ENCODE measurements at regions of chr3 and their contacts with region 1.

Region 1: GRCh38 chr3:48472915-48473616 is 26.5 kb downstream of the ATRIP start:
- DNase-seq: peak; percentile 96
- ATAC-seq: peak; percentile 90
- H3K4me3 ChIP-seq: peak overlapping the region; percentile 61 to 83 (median 65)
- H3K27ac ChIP-seq: peak overlapping the region; percentile 89
- H3K4me1 ChIP-seq: peaks cover 58% of the 10 kb centered on the region
- H3K27me3 ChIP-seq: no peaks in the 10 kb centered on the region; a peak in 1 of 5 replicates
- CTCF ChIP-seq: peak; percentile 79
- EP300 ChIP-seq: peak in 1 of 2 experiments; percentile 55; a peak in 2 of 4 replicates
- POLR2A ChIP-seq: peak in 1 of 2 experiments; percentile 72; a peak in 1 of 4 replicates
- RAD21 ChIP-seq: peak; percentile 75

Region 2: GRCh38 chr3:48240711-48241491 is 232.2 kb before region 1 on chr3 and contains the start of gene ZNF589:
- CTCF ChIA-PET with region 1: no interaction called
- POLR2A ChIA-PET with region 1: interaction called, 10 read pairs
- in situ Hi-C with region 1: no loop called
- intact Hi-C with region 1: no loop called
- DNase-seq: peak; percentile 94
- ATAC-seq: peak; percentile 98
- H3K4me3 ChIP-seq: peak within 1 kb of the TSS; percentile 76 to 97 (median 91)
- H3K27ac ChIP-seq: peak within 1 kb of the TSS; percentile 83
- H3K4me1 ChIP-seq: peaks cover 45% of the 10 kb centered on the region
- H3K27me3 ChIP-seq: no peaks in the 10 kb centered on the region
- CTCF ChIP-seq: peak; percentile 86
- EP300 ChIP-seq: no peak
- POLR2A ChIP-seq: peak; percentile 92 to 95
- RAD21 ChIP-seq: 0 out of 2 replicates have a peak, but pooled peaks have one; percentile 23
- total RNA-seq, gene ZNF589: 5.6 and 7.3 TPM in 2 replicates

Region 3: GRCh38 chr3:48318783-48319468 is 154.1 kb before region 1 on chr3:
- CTCF ChIA-PET with region 1: no interaction called
- POLR2A ChIA-PET with region 1: no interaction called
- in situ Hi-C with region 1: no loop called
- intact Hi-C with region 1: no loop called
- DNase-seq: no peak
- ATAC-seq: no peak
- H3K4me3 ChIP-seq: no peak overlapping the region
- H3K27ac ChIP-seq: no peak overlapping the region
- H3K4me1 ChIP-seq: no peaks in the 10 kb centered on the region; the same call in 1 of the 2 replicates
- H3K27me3 ChIP-seq: no peaks in the 10 kb centered on the region; a peak in 1 of 5 replicates
- CTCF ChIP-seq: no peak
- EP300 ChIP-seq: no peak
- POLR2A ChIP-seq: no peak
- RAD21 ChIP-seq: no peak

Region 4: GRCh38 chr3:48439820-48440589 is 33.1 kb before region 1 on chr3 and contains the starts of genes CCDC51 and TMA7:
- CTCF ChIA-PET with region 1: no interaction called
- POLR2A ChIA-PET with region 1: interaction called, 41 read pairs
- in situ Hi-C with region 1: no loop called
- intact Hi-C with region 1: no loop called
- DNase-seq: peak; percentile 96
- ATAC-seq: peak; percentile 94
- H3K4me3 ChIP-seq: peak within 1 kb of the TSS; percentile 90 to 95 (median 93)
- H3K27ac ChIP-seq: peak within 1 kb of the TSS; percentile 73
- H3K4me1 ChIP-seq: peaks cover 52% of the 10 kb centered on the region
- H3K27me3 ChIP-seq: no peaks in the 10 kb centered on the region; a peak in 1 of 5 replicates
- CTCF ChIP-seq: peak; percentile 19; the same call in 1 of the 2 replicates
- EP300 ChIP-seq: no peak
- POLR2A ChIP-seq: peak; percentile 79 to 86
- RAD21 ChIP-seq: peak; percentile 7; the same call in 1 of the 2 replicates
- total RNA-seq, gene CCDC51: 29.4 and 38.3 TPM in 2 replicates
- total RNA-seq, gene TMA7: 486 and 510 TPM in 2 replicates

Region 5: DNA sequence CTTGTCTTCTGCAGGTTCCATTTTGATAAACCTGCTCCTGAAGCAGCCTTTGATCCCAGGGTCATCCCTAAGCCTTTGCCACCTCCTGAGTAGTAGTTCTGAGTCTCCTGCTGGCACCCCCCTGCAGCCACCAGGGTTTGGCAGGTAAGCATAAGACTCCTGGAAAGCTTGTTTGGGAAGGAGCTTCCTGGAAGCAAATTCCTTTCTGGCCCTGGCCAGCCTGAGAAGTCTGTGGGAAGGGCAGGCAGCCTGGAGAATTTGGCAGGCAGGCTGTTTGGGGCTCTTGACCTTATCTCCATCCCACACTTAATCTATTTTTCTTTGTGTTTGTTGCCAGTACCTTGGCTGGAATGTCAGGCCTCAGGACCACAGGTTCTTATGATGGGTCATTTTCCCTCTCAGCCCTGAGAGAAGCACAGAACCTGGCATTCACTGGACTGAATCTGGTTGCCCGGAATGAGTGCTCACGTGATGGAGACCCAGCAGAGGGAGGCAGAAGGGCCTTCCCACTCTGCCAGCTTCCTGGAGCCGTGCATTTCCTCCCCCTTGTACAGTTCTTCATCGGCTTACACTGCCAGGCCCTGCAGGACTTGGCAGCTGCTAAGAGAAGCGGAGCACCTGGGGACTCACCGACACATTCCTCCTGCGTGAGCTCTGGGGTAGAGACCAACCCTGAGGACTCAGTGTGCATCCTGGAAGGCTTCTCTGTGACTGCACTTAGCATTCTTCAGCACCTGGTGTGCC is 13.1 kb before region 1 on chr3:
- CTCF ChIA-PET with region 1: no interaction called
- POLR2A ChIA-PET with region 1: interaction called, 17 read pairs
- in situ Hi-C with region 1: no loop called
- intact Hi-C with region 1: no loop called
- DNase-seq: no peak
- ATAC-seq: no peak
- H3K4me3 ChIP-seq: no peak overlapping the region
- H3K27ac ChIP-seq: no peak overlapping the region
- H3K4me1 ChIP-seq: no peaks in the 10 kb centered on the region
- H3K27me3 ChIP-seq: no peaks in the 10 kb centered on the region
- CTCF ChIP-seq: no peak
- EP300 ChIP-seq: no peak
- POLR2A ChIP-seq: no peak
- RAD21 ChIP-seq: no peak

Region 6: GRCh38 chr3:48507351-48508061 is 34.4 kb after region 1 on chr3:
- CTCF ChIA-PET with region 1: no interaction called
- POLR2A ChIA-PET with region 1: interaction called, 20 read pairs
- in situ Hi-C with region 1: loop called (anchors 5 kb)
- intact Hi-C with region 1: loop called (anchors 2 kb)
- DNase-seq: peak; percentile 74
- ATAC-seq: peak; percentile 86
- H3K4me3 ChIP-seq: peak overlapping the region in 1 of 3 experiments; percentile 25; a peak in 1 of 6 replicates
- H3K27ac ChIP-seq: no peak overlapping the region
- H3K4me1 ChIP-seq: peaks cover 46% of the 10 kb centered on the region
- H3K27me3 ChIP-seq: peaks cover 0 to 8% of the 10 kb centered on the region in 2 experiments; a peak in 2 of 5 replicates
- CTCF ChIP-seq: peak; percentile 98
- EP300 ChIP-seq: no peak
- POLR2A ChIP-seq: no peak
- RAD21 ChIP-seq: peak; percentile 95

Region 7: DNA sequence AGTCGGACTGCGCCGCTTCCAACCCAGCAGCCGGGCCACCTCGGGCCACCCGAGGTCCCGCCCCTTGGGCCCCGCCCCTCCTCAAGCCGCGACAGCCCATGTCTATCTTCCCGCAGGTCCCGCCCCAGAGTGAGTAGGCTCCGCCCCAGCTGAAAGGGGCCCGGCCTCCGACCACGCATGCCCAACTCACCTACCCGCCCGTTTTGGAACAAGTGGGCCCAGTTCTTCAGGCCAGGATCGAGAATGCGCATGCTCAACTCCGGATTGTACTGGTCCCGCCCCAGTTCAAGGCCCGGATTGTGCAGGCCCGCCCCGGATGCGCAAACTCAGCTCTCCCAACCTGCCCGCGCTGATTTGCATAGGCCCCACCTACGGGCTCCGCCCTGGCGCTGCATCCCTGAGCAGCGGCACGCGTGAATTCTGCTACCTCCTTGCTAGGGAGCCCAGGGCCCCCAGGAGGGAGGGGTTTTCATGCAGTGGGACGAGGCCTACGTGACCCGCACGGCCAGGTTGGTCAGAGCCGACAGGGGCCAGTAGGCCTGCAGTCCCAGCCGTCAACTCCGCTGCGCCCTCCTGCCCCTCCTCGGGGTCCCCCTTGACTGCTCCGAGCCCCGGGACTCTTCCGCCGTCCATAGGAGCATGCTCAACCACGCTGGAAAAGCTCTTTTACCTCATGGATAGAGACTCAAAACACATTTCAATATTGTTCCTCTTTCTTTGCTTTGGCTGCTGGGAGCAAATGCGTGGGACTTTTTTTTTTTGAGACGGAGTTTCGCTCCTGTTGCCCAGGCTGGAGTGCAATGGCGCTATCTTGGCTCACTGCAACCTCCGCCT is 83.9 kb after region 1 on chr3 and contains the start of gene PFKFB4:
- CTCF ChIA-PET with region 1: no interaction called
- POLR2A ChIA-PET with region 1: interaction called, 29 read pairs
- in situ Hi-C with region 1: loop called (anchors 5 kb)
- intact Hi-C with region 1: loop called (anchors 2 kb)
- DNase-seq: peak; percentile 98
- ATAC-seq: peak; percentile 79
- H3K4me3 ChIP-seq: peak within 1 kb of the TSS; percentile 76 to 98 (median 92)
- H3K27ac ChIP-seq: peak within 1 kb of the TSS; percentile 77
- H3K4me1 ChIP-seq: peaks cover 88% of the 10 kb centered on the region
- H3K27me3 ChIP-seq: no peaks in the 10 kb centered on the region; a peak in 1 of 5 replicates
- CTCF ChIP-seq: peak; percentile 55
- EP300 ChIP-seq: peak in 1 of 2 experiments; percentile 34; a peak in 1 of 4 replicates
- POLR2A ChIP-seq: peak in 1 of 2 experiments; percentile 28; a peak in 2 of 4 replicates
- RAD21 ChIP-seq: no peak
- total RNA-seq, gene PFKFB4: 6.4 and 7.1 TPM in 2 replicates